Mammary epithelial cell (primary cell): ENCODE measurements at regions of chr22 and their contacts with region 1.

Region 1: DNA sequence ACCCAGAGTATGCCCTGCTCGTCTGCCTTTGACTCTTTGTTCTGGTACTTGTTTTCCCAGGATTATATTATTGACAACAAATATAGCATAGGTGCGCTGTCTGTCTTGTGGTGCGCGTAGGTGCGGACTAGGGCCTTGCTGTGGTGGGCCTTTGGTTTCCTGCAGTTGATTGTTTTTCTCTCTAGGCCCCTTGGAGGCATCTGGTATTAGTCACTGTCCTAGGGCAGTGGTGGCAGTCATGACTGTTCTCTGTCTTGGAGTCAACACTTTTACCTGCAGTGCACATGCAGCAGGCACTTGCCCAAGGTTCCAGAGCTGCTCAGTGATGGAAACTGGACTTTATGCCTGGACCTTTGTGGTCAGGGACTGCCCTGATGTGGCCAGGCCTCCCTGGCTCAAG is 18.6 kb downstream of the PPP6R2 start:
- DNase-seq: no peak
- H3K4me3 ChIP-seq: no peak overlapping the region
- H3K27ac ChIP-seq: no peak overlapping the region
- H3K4me1 ChIP-seq: no peaks in the 10 kb centered on the region
- H3K27me3 ChIP-seq: no peaks in the 10 kb centered on the region
- CTCF ChIP-seq: no peak

Region 2: GRCh38 chr22:50244420-50245213 is 117.1 kb before region 1 on chr22 and contains the start of gene TUBGCP6:
- CTCF ChIA-PET with region 1: no interaction called
- dilution Hi-C with region 1: no loop called
- in situ Hi-C with region 1: no loop called
- intact Hi-C with region 1: loop called (anchors 1 kb)
- DNase-seq: peak; percentile 91
- H3K4me3 ChIP-seq: peak within 1 kb of the TSS; percentile 67 to 81 (median 69)
- H3K27ac ChIP-seq: peak within 1 kb of the TSS; percentile 69
- H3K4me1 ChIP-seq: peaks cover 23% of the 10 kb centered on the region
- H3K27me3 ChIP-seq: no peaks in the 10 kb centered on the region
- CTCF ChIP-seq: peak in 1 of 2 donors; percentile 28
- total RNA-seq, gene TUBGCP6: 33.0 to 34.0 TPM

Region 3: GRCh38 chr22:50490531-50491308 is 129.0 kb after region 1 on chr22:
- CTCF ChIA-PET with region 1: no interaction called
- dilution Hi-C with region 1: loop called (anchors 5 kb)
- in situ Hi-C with region 1: no loop called
- intact Hi-C with region 1: no loop called
- DNase-seq: no peak
- H3K4me3 ChIP-seq: no peak overlapping the region
- H3K27ac ChIP-seq: no peak overlapping the region
- H3K4me1 ChIP-seq: no peaks in the 10 kb centered on the region
- H3K27me3 ChIP-seq: no peaks in the 10 kb centered on the region
- CTCF ChIP-seq: no peak

Region 4: GRCh38 chr22:50517495-50518260 is 156.0 kb after region 1 on chr22:
- CTCF ChIA-PET with region 1: no interaction called
- dilution Hi-C with region 1: no loop called
- in situ Hi-C with region 1: no loop called
- intact Hi-C with region 1: no loop called
- DNase-seq: no peak
- H3K4me3 ChIP-seq: no peak overlapping the region
- H3K27ac ChIP-seq: no peak overlapping the region
- H3K4me1 ChIP-seq: no peaks in the 10 kb centered on the region
- H3K27me3 ChIP-seq: no peaks in the 10 kb centered on the region
- CTCF ChIP-seq: no peak